ENCODE measurements at regions of chr1 and their contacts with region 1.

Region 1: DNA sequence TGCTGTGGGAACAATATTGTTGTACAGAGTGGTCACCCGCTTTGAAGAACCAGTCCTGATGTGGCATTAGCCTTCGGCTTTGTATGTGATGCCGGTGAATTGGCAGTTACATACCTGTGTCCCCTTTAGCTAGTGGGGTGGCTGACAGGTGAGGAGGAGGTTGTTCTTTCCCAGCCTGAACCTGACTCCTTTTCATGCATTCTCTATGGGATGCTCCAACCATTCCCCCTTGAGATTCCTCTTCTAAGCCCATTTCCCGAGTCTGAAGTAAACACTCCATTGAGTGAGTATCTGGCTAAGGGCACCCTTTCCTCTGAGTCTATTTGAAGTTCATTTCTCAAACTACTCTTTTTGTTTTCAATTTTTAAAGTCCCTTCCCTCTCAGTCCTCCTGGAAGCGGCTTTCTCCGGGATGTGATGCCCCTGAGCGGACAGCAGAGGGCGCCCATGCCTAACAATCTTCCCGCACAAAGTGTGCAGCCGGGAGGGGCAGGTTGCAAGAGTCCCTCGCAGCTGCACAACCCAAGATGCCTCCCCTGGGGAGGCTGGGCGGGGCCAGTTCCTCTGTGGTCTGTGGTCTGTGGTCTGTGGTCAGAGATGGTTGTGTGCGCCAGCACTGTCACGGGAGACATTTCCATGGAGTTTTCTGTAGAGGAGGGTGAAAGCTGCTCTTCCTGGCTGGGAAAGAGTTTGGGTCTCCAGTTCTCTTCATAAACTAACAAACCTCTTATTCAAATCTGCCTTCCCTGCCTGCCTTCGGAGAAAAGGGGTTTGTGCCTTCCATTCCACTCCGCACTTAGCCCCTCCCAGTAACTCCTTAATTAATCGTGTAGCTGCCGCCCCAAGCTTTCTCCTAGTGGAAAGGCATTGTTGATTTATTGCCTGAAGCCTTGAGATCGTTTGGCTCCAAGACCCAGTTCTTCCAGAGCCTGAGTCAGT is 36.4 kb upstream of the LMX1A start:
- DNase-seq: peak; percentile 96 to 98 (median 97)
- H3K4me3 ChIP-seq: peak overlapping the region in 2 of 7 experiments; percentile 49 to 56
- H3K27ac ChIP-seq: no peak overlapping the region
- H3K4me1 ChIP-seq: peaks cover 0 to 16% (median 9%) of the 10 kb centered on the region in 4 experiments
- H3K27me3 ChIP-seq: peaks cover 14 to 90% (median 57%) of the 10 kb centered on the region in 5 experiments

Region 2: GRCh38 chr1:165367375-165367993 is 25.4 kb before region 1 on chr1:
- CTCF ChIA-PET with region 1: interaction called, 52 read pairs
- POLR2A ChIA-PET with region 1: no interaction called
- DNase-seq: peak; percentile 75 to 85 (median 80)
- H3K4me3 ChIP-seq: no peak overlapping the region
- H3K27ac ChIP-seq: no peak overlapping the region
- H3K4me1 ChIP-seq: peaks cover 0 to 6% (median 0%) of the 10 kb centered on the region in 4 experiments
- H3K27me3 ChIP-seq: peaks cover 2 to 85% (median 20%) of the 10 kb centered on the region in 5 experiments

Region 3: DNA sequence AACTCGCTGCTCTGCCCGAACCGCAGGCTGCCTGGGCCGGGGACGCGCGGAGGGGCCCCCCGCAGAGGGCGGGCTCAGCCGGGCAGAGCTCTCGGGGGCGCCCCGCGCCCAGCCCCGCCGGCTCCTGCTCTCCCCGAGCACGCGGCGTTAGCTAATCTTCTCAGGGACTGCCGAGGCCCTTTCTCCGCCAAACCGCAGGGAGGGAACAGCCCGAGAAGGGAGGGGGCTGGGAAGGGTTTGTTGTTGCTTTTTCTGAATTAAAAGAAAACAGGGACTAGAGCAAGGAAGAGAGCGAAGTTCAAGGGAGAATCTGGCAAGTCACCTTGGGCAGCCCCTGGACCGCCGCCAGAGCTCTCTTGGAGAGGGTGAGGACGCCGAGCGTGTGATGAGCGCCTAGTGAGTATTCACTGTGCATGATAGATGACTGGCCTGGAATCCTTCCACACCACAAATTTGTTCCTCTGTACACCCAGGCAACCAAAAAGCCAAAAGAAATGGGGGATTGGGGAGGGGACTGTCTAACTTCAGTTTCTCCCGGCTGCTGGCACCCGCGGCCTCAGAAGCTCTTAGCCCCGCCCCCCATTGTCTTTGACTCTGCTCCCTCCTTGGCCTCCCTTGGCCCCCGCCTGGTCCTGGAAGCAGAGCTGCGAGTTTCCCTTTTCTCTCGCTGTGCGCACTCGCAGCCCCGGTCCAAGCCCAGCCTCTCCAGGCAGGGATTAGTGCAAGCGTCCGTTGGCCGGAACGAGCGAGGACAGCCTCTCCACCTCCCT is 16.7 kb before region 1 on chr1:
- CTCF ChIA-PET with region 1: interaction called, 52 read pairs
- POLR2A ChIA-PET with region 1: interaction called, 3 read pairs
- DNase-seq: peak; percentile 74 to 89 (median 88)
- H3K4me3 ChIP-seq: peak overlapping the region in 5 of 7 experiments; percentile 13 to 54 (median 52)
- H3K27ac ChIP-seq: no peak overlapping the region
- H3K4me1 ChIP-seq: peaks cover 3 to 29% (median 13%) of the 10 kb centered on the region in 4 experiments
- H3K27me3 ChIP-seq: peaks cover 12 to 82% (median 49%) of the 10 kb centered on the region in 5 experiments

Region 4: GRCh38 chr1:165403835-165404482 is 11.1 kb after region 1 on chr1:
- CTCF ChIA-PET with region 1: interaction called, 40 read pairs
- POLR2A ChIA-PET with region 1: no interaction called
- DNase-seq: peak; percentile 25 to 46 (median 44)
- H3K4me3 ChIP-seq: peak overlapping the region in 1 of 7 experiments; percentile 24
- H3K27ac ChIP-seq: no peak overlapping the region
- H3K4me1 ChIP-seq: peaks cover 0 to 4% (median 1%) of the 10 kb centered on the region in 4 experiments
- H3K27me3 ChIP-seq: peaks cover 0 to 89% (median 30%) of the 10 kb centered on the region in 5 experiments

Region 5: GRCh38 chr1:165409657-165410358 is 16.9 kb after region 1 on chr1:
- CTCF ChIA-PET with region 1: interaction called, 40 read pairs
- POLR2A ChIA-PET with region 1: no interaction called
- DNase-seq: no peak
- H3K4me3 ChIP-seq: no peak overlapping the region
- H3K27ac ChIP-seq: no peak overlapping the region
- H3K4me1 ChIP-seq: no peaks in the 10 kb centered on the region
- H3K27me3 ChIP-seq: peaks cover 0 to 95% (median 31%) of the 10 kb centered on the region in 5 experiments

Region 6: DNA sequence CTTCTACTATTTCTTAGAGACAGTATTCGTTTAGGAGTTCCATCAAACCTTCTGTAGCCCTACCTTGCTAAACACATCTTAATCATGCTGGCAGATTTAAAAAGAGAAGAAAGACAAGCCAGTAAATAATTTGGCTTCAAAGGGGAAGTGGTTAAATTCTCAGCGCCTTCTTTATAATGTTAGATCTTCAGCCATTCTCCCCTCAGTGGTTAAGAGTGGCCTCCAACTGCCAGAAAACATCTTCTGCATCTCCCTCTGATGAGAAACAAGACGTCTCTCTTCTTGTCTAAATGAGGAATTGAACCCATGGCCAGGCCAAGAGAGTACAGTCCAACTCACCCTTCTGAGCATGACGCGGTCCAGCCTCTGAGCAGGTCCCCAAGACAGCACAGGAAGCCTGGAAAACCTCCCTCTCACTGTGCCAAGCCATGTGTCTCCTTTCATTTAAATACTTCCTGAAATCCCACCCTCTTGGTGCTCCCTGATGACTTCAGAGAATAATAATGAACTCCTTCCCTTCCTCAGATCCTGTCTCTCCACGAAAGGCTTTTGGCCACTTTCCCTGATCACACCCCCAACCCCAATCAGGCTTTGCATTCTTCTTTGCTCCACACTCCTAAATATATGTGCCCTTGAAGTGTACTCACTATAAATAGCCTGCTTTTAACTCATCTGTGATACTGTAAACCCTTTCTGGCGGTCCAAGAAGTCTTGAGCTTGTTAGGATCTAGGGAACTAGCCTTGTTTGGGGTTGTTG is 134.5 kb after region 1 on chr1:
- CTCF ChIA-PET with region 1: no interaction called
- POLR2A ChIA-PET with region 1: no interaction called
- DNase-seq: peak in 2 of 3 donors; percentile 60 to 66
- H3K4me3 ChIP-seq: no peak overlapping the region
- H3K27ac ChIP-seq: no peak overlapping the region
- H3K4me1 ChIP-seq: peaks cover 0 to 6% (median 0%) of the 10 kb centered on the region in 4 experiments
- H3K27me3 ChIP-seq: peaks cover 3 to 22% (median 12%) of the 10 kb centered on the region in 5 experiments

Region 7: DNA sequence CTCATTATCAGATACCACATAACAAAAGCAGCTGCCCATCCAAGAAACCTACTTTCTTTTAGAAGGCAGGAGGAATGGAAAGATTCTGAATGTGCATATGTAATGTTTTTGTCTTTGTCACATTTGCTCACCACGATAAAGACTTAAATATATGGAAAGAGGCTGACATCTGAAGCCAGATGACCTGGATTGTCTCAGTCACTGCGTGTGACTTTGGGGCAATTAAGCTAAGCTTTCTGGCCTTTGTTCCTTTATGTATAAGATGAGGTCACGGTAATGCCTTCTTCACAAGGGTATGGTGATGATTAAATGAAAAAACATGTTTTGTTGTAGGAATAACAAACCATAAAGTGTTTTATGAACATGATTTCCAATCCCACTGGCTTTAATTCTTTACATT is 193.5 kb after region 1 on chr1:
- CTCF ChIA-PET with region 1: interaction called, 100 read pairs
- POLR2A ChIA-PET with region 1: no interaction called
- DNase-seq: no peak
- H3K4me3 ChIP-seq: no peak overlapping the region
- H3K27ac ChIP-seq: no peak overlapping the region
- H3K4me1 ChIP-seq: no peaks in the 10 kb centered on the region
- H3K27me3 ChIP-seq: peaks cover 14 to 60% (median 32%) of the 10 kb centered on the region in 5 experiments

Region 8: GRCh38 chr1:165597883-165598675 is 205.2 kb after region 1 on chr1:
- CTCF ChIA-PET with region 1: interaction called, 100 read pairs
- POLR2A ChIA-PET with region 1: no interaction called
- DNase-seq: peak; percentile 95 to 98 (median 96)
- H3K4me3 ChIP-seq: peak overlapping the region in 6 of 7 experiments; percentile 63 to 80 (median 72)
- H3K27ac ChIP-seq: peak overlapping the region; percentile 77 to 85
- H3K4me1 ChIP-seq: peaks cover 0 to 16% (median 15%) of the 10 kb centered on the region in 4 experiments
- H3K27me3 ChIP-seq: peaks cover 11 to 45% (median 23%) of the 10 kb centered on the region in 5 experiments

Measured in common myeloid progenitor, CD34-positive (primary cell).